ENCODE measurements at regions of chr15 and their contacts with region 1.

Region 1: DNA sequence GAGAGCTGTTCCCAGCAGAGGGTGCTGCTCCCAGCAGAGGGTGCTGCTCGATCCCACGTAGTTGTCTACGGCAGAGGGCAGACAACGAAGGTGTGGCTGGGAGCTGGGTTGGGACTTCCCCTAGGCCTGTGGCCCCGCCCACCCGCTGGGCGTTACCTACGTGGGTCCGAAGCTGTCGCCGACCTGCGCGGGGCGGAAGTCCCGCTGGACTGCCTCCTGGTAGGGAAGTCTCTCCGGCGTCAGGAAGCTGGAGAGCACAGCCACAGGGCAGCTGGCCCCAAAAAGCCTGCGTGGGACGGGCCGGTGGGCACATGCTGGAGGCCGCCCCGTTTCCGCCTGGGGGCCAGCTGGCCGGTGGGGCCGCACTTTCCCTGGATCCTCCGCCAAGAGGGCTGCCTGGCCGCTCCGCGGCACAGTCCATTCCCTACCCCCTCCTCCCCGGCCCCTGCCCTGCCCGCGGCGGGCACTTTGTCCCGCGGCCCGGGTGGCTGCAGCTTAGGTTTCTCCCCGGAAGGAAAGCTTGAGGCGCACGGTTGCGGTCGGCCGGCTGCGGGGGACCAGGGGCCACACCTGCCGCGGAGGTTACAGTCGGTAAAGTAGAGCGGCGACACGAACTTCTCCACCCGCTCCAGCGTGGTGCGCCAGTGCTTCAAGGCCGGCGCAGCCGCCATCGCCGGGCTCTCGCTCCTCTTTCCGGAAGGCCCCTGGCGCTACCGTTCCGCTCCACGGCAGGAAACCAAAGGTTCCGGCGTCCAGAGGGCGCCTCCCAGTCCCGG is at the start of gene MAN2C1:
- DNase-seq: peak; percentile 80 to 94 (median 86)
- ATAC-seq: peak; percentile 91 to 94
- H3K4me3 Mint-ChIP-seq: peak within 1 kb of the TSS; percentile 84 to 94 (median 90)
- H3K27ac Mint-ChIP-seq: peak within 1 kb of the TSS; percentile 85 to 96 (median 95)
- H3K4me1 Mint-ChIP-seq: peaks cover 8 to 25% (median 20%) of the 10 kb centered on the region in 4 donors
- H3K27me3 Mint-ChIP-seq: no peaks in the 10 kb centered on the region
- polyA plus RNA-seq, gene MAN2C1: 20.4 to 29.8 (median 28.7) TPM

Region 2: GRCh38 chr15:75307778-75308391 is 60.2 kb before region 1 on chr15:
- POLR2A ChIA-PET with region 1: no interaction called
- DNase-seq: peak in 1 of 10 donors; percentile 7
- ATAC-seq: peak in 1 of 2 donors; percentile 30
- H3K4me3 Mint-ChIP-seq: no peak overlapping the region
- H3K27ac Mint-ChIP-seq: no peak overlapping the region
- H3K4me1 Mint-ChIP-seq: peaks cover 0 to 6% (median 3%) of the 10 kb centered on the region in 4 donors
- H3K27me3 Mint-ChIP-seq: peaks cover 10 to 49% (median 34%) of the 10 kb centered on the region in 5 donors

Region 3: DNA sequence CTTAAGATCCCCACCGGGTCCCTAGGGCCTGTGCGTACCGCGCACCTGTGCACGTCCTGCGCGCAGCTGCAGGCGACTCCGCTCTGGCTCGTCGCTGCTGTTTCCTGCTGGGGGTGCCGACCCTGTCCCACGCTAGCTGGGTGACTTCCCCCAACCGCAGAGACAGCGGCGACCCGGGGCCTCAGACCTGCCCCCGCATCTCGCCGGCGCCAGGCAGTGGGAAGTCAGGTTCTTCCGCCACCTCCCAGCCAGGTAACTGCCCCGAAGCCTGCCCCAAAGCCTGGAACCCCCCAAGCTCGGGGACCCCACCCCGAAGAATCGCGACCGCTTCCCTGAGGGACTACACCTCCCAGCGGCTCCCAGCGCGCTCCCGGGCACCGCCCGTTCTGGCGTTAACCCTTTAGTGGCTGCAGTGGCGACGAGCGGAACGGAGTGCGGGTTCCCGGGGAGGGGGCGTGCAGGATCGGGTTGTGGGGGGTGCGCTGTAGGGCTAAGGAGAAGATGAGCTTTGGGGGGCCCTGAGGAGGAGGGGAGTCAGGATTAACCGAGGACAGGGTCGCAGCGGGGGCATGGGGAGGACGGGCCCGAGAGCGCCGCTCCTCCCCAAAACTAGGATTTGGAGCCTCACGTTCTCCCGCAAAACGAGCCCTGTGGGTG is 20.8 kb before region 1 on chr15:
- POLR2A ChIA-PET with region 1: interaction called, 76 read pairs
- DNase-seq: peak; percentile 44 to 81 (median 62)
- ATAC-seq: peak; percentile 68 to 80
- H3K4me3 Mint-ChIP-seq: peak overlapping the region; percentile 81 to 93 (median 88)
- H3K27ac Mint-ChIP-seq: peak overlapping the region; percentile 65 to 96 (median 84)
- H3K4me1 Mint-ChIP-seq: peaks cover 17 to 48% (median 44%) of the 10 kb centered on the region in 4 donors
- H3K27me3 Mint-ChIP-seq: peaks cover 0 to 3% (median 0%) of the 10 kb centered on the region in 5 donors

Region 4: DNA sequence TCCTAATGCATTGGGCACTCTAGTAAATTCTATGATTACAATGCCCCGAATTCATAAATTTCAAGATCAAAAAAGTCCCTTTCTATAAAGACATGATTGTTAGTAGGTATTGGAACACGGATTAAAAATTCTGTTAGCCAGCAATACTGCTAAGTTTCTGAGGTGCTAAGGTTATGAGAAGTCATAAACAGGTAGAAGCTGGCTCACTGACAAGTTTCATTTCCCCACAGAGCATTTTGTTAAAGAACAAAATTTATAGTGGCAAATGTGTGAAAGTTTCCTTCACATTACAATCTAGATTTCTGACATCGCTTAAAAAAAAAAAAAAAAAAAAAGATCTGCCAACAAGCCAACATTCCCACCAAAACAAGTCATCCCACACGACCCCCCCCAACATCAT is 12.7 kb after region 1 on chr15:
- POLR2A ChIA-PET with region 1: interaction called, 12 read pairs
- DNase-seq: no peak
- ATAC-seq: no peak
- H3K4me3 Mint-ChIP-seq: no peak overlapping the region
- H3K27ac Mint-ChIP-seq: peak overlapping the region in 4 of 10 donors; percentile 6 to 43 (median 26)
- H3K4me1 Mint-ChIP-seq: peaks cover 0 to 6% (median 1%) of the 10 kb centered on the region in 4 donors
- H3K27me3 Mint-ChIP-seq: no peaks in the 10 kb centered on the region

Region 5: GRCh38 chr15:75625542-75626347 is 257.6 kb after region 1 on chr15 and contains the start of gene SNUPN:
- POLR2A ChIA-PET with region 1: interaction called, 21 read pairs
- DNase-seq: peak; percentile 83 to 96 (median 90)
- ATAC-seq: peak; percentile 89 to 92
- H3K4me3 Mint-ChIP-seq: peak within 1 kb of the TSS; percentile 90 to 100 (median 96)
- H3K27ac Mint-ChIP-seq: peak within 1 kb of the TSS; percentile 91 to 100 (median 98)
- H3K4me1 Mint-ChIP-seq: peaks cover 16 to 39% (median 32%) of the 10 kb centered on the region in 4 donors
- H3K27me3 Mint-ChIP-seq: no peaks in the 10 kb centered on the region
- polyA plus RNA-seq, gene SNUPN: 20.1 to 33.7 (median 21.7) TPM

Region 6: GRCh38 chr15:75647370-75648155 is 279.5 kb after region 1 on chr15 and contains the start of gene SNX33:
- POLR2A ChIA-PET with region 1: interaction called, 12 read pairs
- DNase-seq: peak in 9 of 10 donors; percentile 12 to 68 (median 48)
- ATAC-seq: peak; percentile 70 to 83
- H3K4me3 Mint-ChIP-seq: peak within 1 kb of the TSS; percentile 79 to 93 (median 87)
- H3K27ac Mint-ChIP-seq: peak within 1 kb of the TSS; percentile 61 to 88 (median 78)
- H3K4me1 Mint-ChIP-seq: peaks cover 11 to 37% (median 33%) of the 10 kb centered on the region in 4 donors
- H3K27me3 Mint-ChIP-seq: no peaks in the 10 kb centered on the region
- polyA plus RNA-seq, gene SNX33: 0.05 to 0.44 (median 0.30) TPM